IMR-90 (cell line): ENCODE measurements at regions of chr10 and their contacts with region 1.

Region 1: DNA sequence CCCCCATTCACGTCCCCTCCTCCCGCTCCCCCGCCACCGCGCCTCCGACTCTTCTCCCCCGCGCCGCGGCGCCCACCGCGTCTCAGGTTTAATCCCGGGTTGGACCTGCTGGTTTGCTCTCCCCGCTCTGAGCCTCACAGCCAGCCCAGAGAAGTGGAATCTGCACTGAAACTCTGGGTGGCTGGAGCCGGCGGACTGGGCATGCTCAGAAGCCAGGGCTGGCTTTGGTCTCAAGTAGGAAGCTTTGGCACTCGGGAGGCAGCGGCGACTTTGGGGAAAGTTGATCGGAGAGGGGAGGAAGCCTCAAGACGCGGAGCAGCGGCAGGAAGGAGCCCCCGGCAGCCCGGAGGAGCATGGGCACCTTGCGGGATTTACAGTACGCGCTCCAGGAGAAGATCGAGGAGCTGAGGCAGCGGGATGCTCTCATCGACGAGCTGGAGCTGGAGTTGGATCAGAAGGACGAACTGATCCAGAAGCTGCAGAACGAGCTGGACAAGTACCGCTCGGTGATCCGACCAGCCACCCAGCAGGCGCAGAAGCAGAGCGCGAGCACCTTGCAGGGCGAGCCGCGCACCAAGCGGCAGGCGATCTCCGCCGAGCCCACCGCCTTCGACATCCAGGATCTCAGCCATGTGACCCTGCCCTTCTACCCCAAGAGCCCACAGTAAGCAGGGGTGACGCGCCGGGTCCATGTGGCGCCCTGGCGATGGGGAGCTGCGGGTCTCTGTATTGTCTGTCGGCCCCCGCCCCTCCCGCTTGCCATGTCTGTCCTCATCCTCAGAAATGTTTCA is at the start of gene PRKG1:
- DNase-seq: peak; percentile 85
- ATAC-seq: peak; percentile 92
- H3K4me3 ChIP-seq: peak within 1 kb of the TSS; percentile 62
- H3K27ac ChIP-seq: peak within 1 kb of the TSS; percentile 82
- H3K4me1 ChIP-seq: peaks cover 6% of the 10 kb centered on the region; the same call in 1 of the 2 replicates
- H3K27me3 ChIP-seq: no peaks in the 10 kb centered on the region
- CTCF ChIP-seq: no peak
- POLR2A ChIP-seq: 0 out of 2 replicates have a peak, but pooled peaks have one; percentile 19
- RAD21 ChIP-seq: peak; percentile 16; the same call in 1 of the 2 replicates
- total RNA-seq, gene PRKG1: 18.3 and 22.5 TPM in 2 replicates

Region 2: DNA sequence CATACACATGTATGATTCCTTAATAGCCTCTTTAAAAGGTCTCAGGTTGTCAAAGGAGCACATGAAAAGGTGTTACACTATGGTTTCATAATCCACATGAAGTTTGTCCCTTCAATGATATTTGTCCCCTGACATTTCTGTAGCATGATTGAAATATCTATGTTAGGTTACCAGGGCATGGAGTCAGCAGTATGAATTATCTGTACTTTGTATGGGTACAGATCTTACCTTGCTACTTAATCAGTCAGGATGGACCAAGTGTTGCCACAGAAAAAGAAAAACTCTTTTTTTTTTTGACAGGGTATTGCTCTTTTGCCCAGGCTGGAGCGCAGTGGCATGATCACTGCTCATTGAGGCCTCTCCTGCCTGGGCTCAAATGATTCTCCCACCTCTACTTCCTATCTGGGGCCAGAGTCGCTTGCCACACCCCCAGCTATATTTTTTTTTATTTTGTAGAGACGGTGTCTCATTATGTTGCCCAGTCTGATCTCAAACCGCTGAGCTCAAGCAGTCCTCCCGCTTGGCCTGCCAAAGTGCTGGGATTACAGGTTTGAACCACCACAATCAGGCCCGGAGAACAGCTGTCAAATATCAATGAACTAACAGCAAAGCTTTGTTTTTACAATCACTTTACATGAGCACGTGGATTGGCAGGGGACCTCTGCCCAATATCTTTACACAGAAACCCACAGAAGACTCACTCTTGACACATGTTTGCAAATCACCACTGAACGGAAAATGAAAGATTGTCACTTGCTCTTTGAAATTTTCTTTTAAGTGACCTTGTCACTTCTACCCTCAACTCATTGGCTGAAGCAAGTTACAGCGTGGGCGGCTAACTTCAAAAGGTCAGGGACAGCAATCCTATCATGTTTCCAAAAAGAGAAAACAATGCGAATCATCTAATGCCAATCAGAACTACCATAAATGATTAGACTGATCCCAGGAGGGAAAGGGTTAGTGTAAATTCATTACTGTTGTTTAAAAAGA is 140.1 kb after region 1 on chr10:
- CTCF ChIA-PET with region 1: no interaction called
- POLR2A ChIA-PET with region 1: no interaction called
- dilution Hi-C with region 1: no loop called
- in situ Hi-C with region 1: no loop called
- intact Hi-C with region 1: loop called (anchors 5 kb)
- DNase-seq: peak; percentile 30
- ATAC-seq: no peak
- H3K4me3 ChIP-seq: no peak overlapping the region
- H3K27ac ChIP-seq: no peak overlapping the region
- H3K4me1 ChIP-seq: peaks cover 6% of the 10 kb centered on the region
- H3K27me3 ChIP-seq: no peaks in the 10 kb centered on the region
- CTCF ChIP-seq: no peak
- POLR2A ChIP-seq: no peak
- RAD21 ChIP-seq: no peak